CD4-positive, alpha-beta T cell (primary cell): ENCODE measurements at regions of chr9 and their contacts with region 1.

Region 1: DNA sequence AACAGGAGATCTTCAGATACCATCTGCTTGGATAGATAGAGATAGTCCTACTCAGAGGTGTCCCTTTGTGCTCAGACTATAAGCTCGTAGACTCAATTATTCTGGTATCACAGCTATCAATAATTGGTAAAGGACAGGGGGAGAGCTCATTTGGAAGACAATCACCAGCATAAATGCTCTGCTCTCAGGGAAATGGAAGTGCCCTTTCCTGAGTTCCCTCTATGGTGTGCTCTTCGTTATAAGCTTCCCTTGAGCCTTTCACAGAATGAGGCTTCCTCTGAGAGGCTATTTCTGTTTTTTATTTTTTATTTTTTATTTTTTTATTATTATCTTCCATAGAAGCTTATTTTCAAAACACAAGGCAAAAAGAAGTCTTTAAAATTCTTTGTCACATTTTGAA is 1155.7 kb upstream of the DMAC1 start:
- DNase-seq: no peak
- ATAC-seq: no peak
- H3K4me3 ChIP-seq: no peak overlapping the region
- H3K4me3 Mint-ChIP-seq: no peak overlapping the region
- H3K27ac ChIP-seq: no peak overlapping the region
- H3K27ac Mint-ChIP-seq: no peak overlapping the region
- H3K4me1 ChIP-seq: no peaks in the 10 kb centered on the region
- H3K4me1 Mint-ChIP-seq: no peaks in the 10 kb centered on the region
- H3K27me3 ChIP-seq: no peaks in the 10 kb centered on the region
- H3K27me3 Mint-ChIP-seq: no peaks in the 10 kb centered on the region
- CTCF ChIP-seq: no peak

Region 2: GRCh38 chr9:8679371-8679822 is 275.9 kb before region 1 on chr9:
- CTCF ChIA-PET with region 1: no interaction called
- POLR2A ChIA-PET with region 1: no interaction called
- intact Hi-C with region 1: no loop called
- DNase-seq: no peak
- ATAC-seq: no peak
- H3K4me3 ChIP-seq: no peak overlapping the region
- H3K4me3 Mint-ChIP-seq: no peak overlapping the region
- H3K27ac ChIP-seq: no peak overlapping the region
- H3K27ac Mint-ChIP-seq: no peak overlapping the region
- H3K4me1 ChIP-seq: no peaks in the 10 kb centered on the region
- H3K4me1 Mint-ChIP-seq: no peaks in the 10 kb centered on the region
- H3K27me3 ChIP-seq: no peaks in the 10 kb centered on the region
- H3K27me3 Mint-ChIP-seq: no peaks in the 10 kb centered on the region
- CTCF ChIP-seq: no peak

Region 3: GRCh38 chr9:8895861-8896224 is 59.5 kb before region 1 on chr9:
- CTCF ChIA-PET with region 1: no interaction called
- POLR2A ChIA-PET with region 1: no interaction called
- intact Hi-C with region 1: loop called in 1 of 2 experiments (anchors 10 kb)
- DNase-seq: peak in 3 of 14 experiments; percentile 9 to 24 (median 21)
- ATAC-seq: no peak
- H3K4me3 ChIP-seq: no peak overlapping the region
- H3K4me3 Mint-ChIP-seq: no peak overlapping the region
- H3K27ac ChIP-seq: no peak overlapping the region
- H3K27ac Mint-ChIP-seq: no peak overlapping the region
- H3K4me1 ChIP-seq: no peaks in the 10 kb centered on the region
- H3K4me1 Mint-ChIP-seq: no peaks in the 10 kb centered on the region
- H3K27me3 ChIP-seq: no peaks in the 10 kb centered on the region
- H3K27me3 Mint-ChIP-seq: no peaks in the 10 kb centered on the region
- CTCF ChIP-seq: no peak

Region 4: DNA sequence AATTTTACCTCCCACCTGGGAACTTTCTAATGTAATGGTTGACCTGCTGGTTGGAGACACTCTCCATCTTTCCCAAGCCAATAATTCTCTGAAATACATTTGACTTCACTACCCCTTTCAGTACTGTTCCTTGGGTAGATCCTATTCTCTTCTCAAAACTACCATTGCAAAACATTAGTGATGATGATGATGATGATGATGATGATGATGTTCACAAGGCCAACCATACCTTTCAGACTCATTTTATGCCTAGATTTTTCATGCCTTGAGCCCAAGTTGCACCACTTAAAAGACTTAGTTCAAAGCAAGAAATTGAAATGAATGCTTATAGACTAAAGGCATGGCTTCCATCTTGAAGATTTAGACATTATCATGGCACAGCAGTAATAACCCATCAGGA is 14.7 kb before region 1 on chr9:
- CTCF ChIA-PET with region 1: no interaction called
- POLR2A ChIA-PET with region 1: no interaction called
- intact Hi-C with region 1: no loop called
- DNase-seq: no peak
- ATAC-seq: no peak
- H3K4me3 ChIP-seq: no peak overlapping the region
- H3K4me3 Mint-ChIP-seq: no peak overlapping the region
- H3K27ac ChIP-seq: no peak overlapping the region
- H3K27ac Mint-ChIP-seq: no peak overlapping the region
- H3K4me1 ChIP-seq: no peaks in the 10 kb centered on the region
- H3K4me1 Mint-ChIP-seq: no peaks in the 10 kb centered on the region
- H3K27me3 ChIP-seq: no peaks in the 10 kb centered on the region
- H3K27me3 Mint-ChIP-seq: no peaks in the 10 kb centered on the region
- CTCF ChIP-seq: no peak